Heart right ventricle (tissue), 16 donors: ENCODE measurements at regions of chr20 and their contacts with region 1.

Region 1: GRCh38 chr20:22861990-22862389 is 173.1 kb upstream of the SSTR4 start:
- DNase-seq: peak; percentile 43 to 68
- ATAC-seq: peak; percentile 75 to 93 (median 84)
- H3K4me3 ChIP-seq: no peak overlapping the region
- H3K27ac ChIP-seq: peak overlapping the region in 9 of 10 donors; percentile 39 to 85 (median 71)
- H3K4me1 ChIP-seq: peaks cover 0 to 35% (median 5%) of the 10 kb centered on the region in 9 donors
- H3K27me3 ChIP-seq: peaks cover 0 to 6% (median 0%) of the 10 kb centered on the region in 7 donors
- CTCF ChIP-seq: no peak

Region 2: GRCh38 chr20:22716821-22717351 is 145.1 kb before region 1 on chr20:
- intact Hi-C with region 1: loop called in 4 of 10 experiments (anchors 2 to 10 kb)
- DNase-seq: no peak
- ATAC-seq: no peak
- H3K4me3 ChIP-seq: no peak overlapping the region
- H3K27ac ChIP-seq: peak overlapping the region in 8 of 10 donors; percentile 6 to 75 (median 58)
- H3K4me1 ChIP-seq: peaks cover 5 to 48% (median 37%) of the 10 kb centered on the region in 9 donors
- H3K27me3 ChIP-seq: no peaks in the 10 kb centered on the region
- CTCF ChIP-seq: no peak

Region 3: DNA sequence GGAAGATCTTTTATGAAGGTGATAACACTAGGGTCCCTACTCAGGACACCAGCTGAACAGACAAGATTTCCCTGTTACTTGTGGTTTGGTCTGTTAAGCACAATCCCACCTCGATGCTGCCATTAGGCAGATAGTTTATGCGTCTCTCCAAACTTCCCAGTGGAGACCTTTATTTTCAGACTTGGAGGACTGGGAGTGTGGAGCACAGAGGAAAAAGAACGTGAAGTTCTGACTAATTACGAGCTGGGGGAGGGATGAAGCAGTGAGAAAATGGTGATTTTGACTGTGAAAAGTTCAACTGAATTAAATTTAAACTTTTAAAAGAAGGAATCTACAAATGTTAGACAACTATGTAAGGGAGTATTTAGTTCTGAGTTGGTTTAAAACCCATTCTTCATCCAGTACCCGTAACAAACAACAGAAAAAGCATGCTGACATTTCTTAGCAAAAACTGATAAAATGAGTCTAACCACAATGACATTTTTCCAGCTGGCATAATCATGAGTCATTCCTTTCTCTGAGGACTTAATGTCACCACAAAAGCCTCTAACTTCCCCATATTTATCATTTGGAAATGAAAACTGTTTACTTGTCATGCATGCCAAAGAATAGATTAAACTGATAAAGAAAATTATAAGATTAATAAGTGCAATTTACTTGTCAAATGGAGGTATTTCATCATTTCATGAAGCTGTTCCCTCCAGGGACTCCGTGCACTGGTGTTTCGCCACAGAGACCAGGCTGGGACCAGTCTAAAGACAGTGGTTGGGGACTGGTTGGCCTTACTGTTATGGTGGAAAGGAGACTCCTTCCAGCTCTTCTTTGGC is 59.8 kb after region 1 on chr20:
- intact Hi-C with region 1: loop called in 1 of 10 experiments (anchors 10 kb)
- DNase-seq: no peak
- ATAC-seq: peak in 1 of 8 donors; percentile 37
- H3K4me3 ChIP-seq: no peak overlapping the region
- H3K27ac ChIP-seq: peak overlapping the region in 2 of 10 donors; percentile 6 to 47
- H3K4me1 ChIP-seq: peaks cover 0 to 29% (median 12%) of the 10 kb centered on the region in 9 donors
- H3K27me3 ChIP-seq: peaks cover 0 to 91% (median 2%) of the 10 kb centered on the region in 7 donors
- CTCF ChIP-seq: no peak

Region 4: DNA sequence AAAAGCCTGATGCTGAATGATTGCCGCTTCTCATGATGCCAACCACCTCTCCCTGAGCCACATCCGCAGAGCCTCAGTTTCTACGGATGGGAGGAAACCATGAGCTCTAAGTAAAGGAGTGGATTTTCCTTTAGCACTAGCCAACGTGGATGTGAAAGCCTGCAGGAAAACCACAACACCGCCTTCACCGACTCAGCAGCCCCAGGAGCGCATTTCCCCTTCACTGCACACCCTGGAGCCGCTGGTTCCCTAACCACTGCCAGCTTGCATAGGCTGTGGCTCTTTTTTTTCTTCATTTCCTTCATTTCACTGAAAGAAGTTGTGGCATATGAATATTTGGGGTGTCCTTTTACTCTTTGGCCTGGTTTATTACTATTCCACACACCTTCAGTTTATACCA is 122.6 kb after region 1 on chr20:
- intact Hi-C with region 1: loop called in 5 of 10 experiments (anchors 1 to 10 kb)
- DNase-seq: peak in 1 of 2 donors; percentile 18
- ATAC-seq: peak in 7 of 8 donors; percentile 45 to 78 (median 76)
- H3K4me3 ChIP-seq: no peak overlapping the region
- H3K27ac ChIP-seq: peak overlapping the region in 7 of 10 donors; percentile 14 to 74 (median 60)
- H3K4me1 ChIP-seq: peaks cover 3 to 21% (median 12%) of the 10 kb centered on the region in 9 donors
- H3K27me3 ChIP-seq: peaks cover 0 to 20% (median 0%) of the 10 kb centered on the region in 7 donors
- CTCF ChIP-seq: no peak

Region 5: GRCh38 chr20:23350196-23350903 is 488.4 kb after region 1 on chr20 and contains the start of gene NXT1:
- intact Hi-C with region 1: loop called in 1 of 10 experiments (anchors 10 kb)
- DNase-seq: peak; percentile 97 to 98
- ATAC-seq: peak; percentile 93 to 97 (median 96)
- H3K4me3 ChIP-seq: peak within 1 kb of the TSS; percentile 78 to 97 (median 86)
- H3K27ac ChIP-seq: peak within 1 kb of the TSS; percentile 88 to 100 (median 98)
- H3K4me1 ChIP-seq: peaks cover 3 to 29% (median 24%) of the 10 kb centered on the region in 9 donors
- H3K27me3 ChIP-seq: no peaks in the 10 kb centered on the region
- CTCF ChIP-seq: no peak
- total RNA-seq, gene NXT1: 4.5 to 12.9 (median 6.5) TPM